ENCODE measurements at regions of chr2 and their contacts with region 1.

Region 1: DNA sequence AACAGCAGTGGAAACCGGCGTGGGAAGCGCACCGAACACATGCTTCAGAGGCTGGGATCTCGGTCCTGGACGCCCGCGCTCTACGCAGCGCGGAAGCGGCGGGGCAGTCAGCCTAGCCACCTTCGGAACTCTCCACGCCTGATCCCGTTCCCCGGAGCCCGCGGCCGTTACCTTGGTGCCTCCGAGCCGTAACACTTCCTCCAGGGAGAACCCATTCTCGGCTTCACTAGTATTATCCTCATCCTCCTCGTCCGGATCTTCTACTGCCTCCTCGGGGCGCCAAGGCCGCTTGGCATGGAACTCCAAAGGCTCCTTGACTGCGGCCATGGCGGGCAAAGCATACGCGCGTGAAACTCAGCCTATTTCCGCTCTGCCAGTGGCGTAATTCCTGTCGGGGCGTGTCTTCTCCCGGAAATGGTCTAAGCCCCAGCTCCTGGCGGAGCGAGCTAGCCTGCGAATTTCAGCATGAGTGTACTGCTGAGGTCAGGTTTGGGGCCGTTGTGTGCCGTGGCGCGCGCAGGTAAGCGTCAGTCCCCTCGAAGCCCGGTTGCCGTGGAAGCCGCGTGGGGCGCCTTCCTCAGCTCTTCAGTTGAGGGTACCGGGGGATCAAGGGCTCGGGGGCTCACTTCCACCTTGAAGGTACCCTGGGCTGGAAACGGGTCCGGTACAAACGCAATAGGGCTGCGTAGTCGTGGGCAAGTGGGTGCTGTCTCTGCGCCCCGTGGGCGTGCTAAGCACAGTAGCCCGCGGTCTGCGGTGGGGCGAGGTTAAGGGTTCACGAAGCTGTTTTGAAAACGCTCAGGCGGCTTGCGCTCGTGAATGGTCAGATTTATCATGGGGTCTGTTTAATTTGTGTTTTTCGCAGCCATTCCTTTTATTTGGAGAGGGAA is at the starts of genes CEBPZ and NDUFAF7:
- DNase-seq: peak; percentile 59
- ATAC-seq: peak; percentile 93
- H3K4me3 ChIP-seq: peak within 1 kb of the TSS; percentile 91
- H3K27ac ChIP-seq: peak within 1 kb of the TSS; percentile 87
- H3K4me1 ChIP-seq: no peaks in the 10 kb centered on the region
- H3K27me3 ChIP-seq: no peaks in the 10 kb centered on the region
- CTCF ChIP-seq: no peak
- EP300 ChIP-seq: no peak
- POLR2A ChIP-seq: peak; percentile 94
- RAD21 ChIP-seq: no peak
- polyA plus RNA-seq, gene CEBPZ: 38.2 to 69.6 TPM
- polyA plus RNA-seq, gene NDUFAF7: 18.3 to 25.0 TPM

Region 2: GRCh38 chr2:36993841-36994620 is 237.5 kb before region 1 on chr2:
- CTCF ChIA-PET with region 1: no interaction called
- POLR2A ChIA-PET with region 1: no interaction called
- RAD21 ChIA-PET with region 1: no interaction called
- SMC1A ChIA-PET with region 1: no interaction called
- in situ Hi-C with region 1: no loop called
- intact Hi-C with region 1: no loop called
- DNase-seq: no peak
- ATAC-seq: no peak
- H3K4me3 ChIP-seq: no peak overlapping the region
- H3K27ac ChIP-seq: no peak overlapping the region
- H3K4me1 ChIP-seq: no peaks in the 10 kb centered on the region
- H3K27me3 ChIP-seq: no peaks in the 10 kb centered on the region
- CTCF ChIP-seq: no peak
- EP300 ChIP-seq: no peak
- POLR2A ChIP-seq: no peak
- RAD21 ChIP-seq: no peak

Region 3: DNA sequence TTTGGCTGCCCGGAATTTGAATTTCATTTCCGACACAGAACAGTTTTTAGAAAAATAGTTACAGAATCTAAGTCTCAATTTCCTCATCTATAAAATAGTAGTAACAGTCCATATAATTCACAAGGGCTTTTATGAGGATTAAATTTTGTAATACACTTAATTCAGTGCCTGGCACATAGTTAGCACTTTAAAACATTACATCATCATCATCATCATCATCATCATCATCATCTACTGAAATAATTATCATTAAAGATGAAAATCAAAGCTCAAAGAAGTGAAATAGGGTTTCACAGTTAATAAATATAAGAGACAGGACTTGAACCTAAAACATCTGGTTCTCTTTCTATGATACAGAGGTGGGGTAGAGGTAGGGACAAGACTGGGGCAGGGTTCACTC is 160.6 kb before region 1 on chr2:
- CTCF ChIA-PET with region 1: no interaction called
- POLR2A ChIA-PET with region 1: no interaction called
- RAD21 ChIA-PET with region 1: no interaction called
- SMC1A ChIA-PET with region 1: no interaction called
- in situ Hi-C with region 1: no loop called
- intact Hi-C with region 1: no loop called
- DNase-seq: no peak
- ATAC-seq: no peak
- H3K4me3 ChIP-seq: no peak overlapping the region
- H3K27ac ChIP-seq: no peak overlapping the region
- H3K4me1 ChIP-seq: no peaks in the 10 kb centered on the region
- H3K27me3 ChIP-seq: no peaks in the 10 kb centered on the region
- CTCF ChIP-seq: no peak
- EP300 ChIP-seq: no peak
- POLR2A ChIP-seq: no peak
- RAD21 ChIP-seq: no peak

Region 4: GRCh38 chr2:37156857-37157714 is 74.4 kb before region 1 on chr2 and contains the start of gene EIF2AK2:
- CTCF ChIA-PET with region 1: interaction called, 3 read pairs
- POLR2A ChIA-PET with region 1: interaction called, 4 read pairs
- RAD21 ChIA-PET with region 1: interaction called, 5 read pairs
- SMC1A ChIA-PET with region 1: no interaction called
- in situ Hi-C with region 1: no loop called
- intact Hi-C with region 1: loop called (anchors 5 kb)
- DNase-seq: no peak
- ATAC-seq: peak; percentile 92
- H3K4me3 ChIP-seq: peak within 1 kb of the TSS; percentile 92
- H3K27ac ChIP-seq: peak within 1 kb of the TSS; percentile 95
- H3K4me1 ChIP-seq: peaks cover 12% of the 10 kb centered on the region
- H3K27me3 ChIP-seq: no peaks in the 10 kb centered on the region
- CTCF ChIP-seq: no peak
- EP300 ChIP-seq: no peak
- POLR2A ChIP-seq: peak; percentile 87
- RAD21 ChIP-seq: no peak
- polyA plus RNA-seq, gene EIF2AK2: 16.2 to 34.6 TPM

Region 5: DNA sequence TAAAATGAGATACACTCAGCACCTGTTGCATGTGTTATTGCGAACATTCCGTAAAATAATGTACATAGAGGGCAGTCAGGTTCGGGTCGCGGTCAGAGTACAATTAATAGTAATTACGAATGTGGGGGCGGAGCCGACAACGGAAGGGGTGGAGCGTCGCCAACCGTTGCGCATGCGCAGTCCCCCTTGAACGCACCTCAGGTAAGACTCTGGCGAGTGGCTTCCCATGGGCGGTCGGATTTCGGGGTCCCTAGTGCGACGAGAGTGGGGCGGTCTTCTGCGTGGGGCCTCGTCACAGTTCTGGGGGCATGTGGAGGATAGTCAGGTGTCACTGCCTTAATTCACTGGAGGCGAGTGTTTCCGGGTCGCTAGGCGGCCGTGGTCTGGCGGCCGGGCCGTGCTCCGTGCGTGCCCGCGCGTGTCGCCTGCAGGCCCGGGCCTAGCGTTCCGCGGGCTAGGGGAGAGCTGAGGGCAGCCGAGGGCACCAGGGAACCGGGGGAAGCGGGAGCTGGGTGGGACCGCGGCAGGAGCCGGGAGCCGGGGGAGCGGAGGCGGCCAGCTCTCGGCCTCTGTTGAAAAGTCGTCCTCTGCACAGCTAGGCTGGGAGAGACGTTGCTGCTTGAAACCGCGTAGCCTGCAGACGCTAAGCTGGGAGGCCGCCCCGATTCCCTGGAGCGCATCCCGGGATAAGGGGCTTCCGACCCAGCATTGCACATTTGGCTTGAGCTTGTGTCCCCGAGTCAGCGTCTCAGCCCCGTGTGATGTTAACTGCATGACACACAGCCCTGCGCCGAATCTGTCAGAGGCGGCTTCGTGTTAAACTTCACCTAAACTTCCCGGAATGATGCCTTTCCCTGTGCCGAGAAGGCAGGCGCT is 34.9 kb before region 1 on chr2 and contains the start of gene CEBPZOS:
- CTCF ChIA-PET with region 1: interaction called, 5 read pairs
- POLR2A ChIA-PET with region 1: interaction called, 11 read pairs
- RAD21 ChIA-PET with region 1: interaction called, 4 read pairs
- SMC1A ChIA-PET with region 1: interaction called, 6 read pairs
- in situ Hi-C with region 1: no loop called
- intact Hi-C with region 1: no loop called
- DNase-seq: peak; percentile 71
- ATAC-seq: peak; percentile 85
- H3K4me3 ChIP-seq: peak within 1 kb of the TSS; percentile 77
- H3K27ac ChIP-seq: peak within 1 kb of the TSS; percentile 78
- H3K4me1 ChIP-seq: peaks cover 5% of the 10 kb centered on the region; the same call in 1 of the 2 replicates
- H3K27me3 ChIP-seq: no peaks in the 10 kb centered on the region
- CTCF ChIP-seq: no peak
- EP300 ChIP-seq: no peak
- POLR2A ChIP-seq: peak; percentile 86
- RAD21 ChIP-seq: no peak
- polyA plus RNA-seq, gene CEBPZOS: 22.9 to 50.8 TPM

Region 6: GRCh38 chr2:37274359-37274965 is 43.0 kb after region 1 on chr2:
- CTCF ChIA-PET with region 1: no interaction called
- POLR2A ChIA-PET with region 1: no interaction called
- RAD21 ChIA-PET with region 1: no interaction called
- SMC1A ChIA-PET with region 1: no interaction called
- in situ Hi-C with region 1: no loop called
- intact Hi-C with region 1: no loop called
- DNase-seq: no peak
- ATAC-seq: no peak
- H3K4me3 ChIP-seq: no peak overlapping the region
- H3K27ac ChIP-seq: no peak overlapping the region
- H3K4me1 ChIP-seq: no peaks in the 10 kb centered on the region
- H3K27me3 ChIP-seq: no peaks in the 10 kb centered on the region
- CTCF ChIP-seq: no peak
- EP300 ChIP-seq: no peak
- POLR2A ChIP-seq: no peak
- RAD21 ChIP-seq: no peak

Region 7: GRCh38 chr2:37523814-37524362 is 292.4 kb after region 1 on chr2:
- CTCF ChIA-PET with region 1: no interaction called
- POLR2A ChIA-PET with region 1: no interaction called
- RAD21 ChIA-PET with region 1: no interaction called
- SMC1A ChIA-PET with region 1: no interaction called
- in situ Hi-C with region 1: no loop called
- intact Hi-C with region 1: no loop called
- DNase-seq: no peak
- ATAC-seq: no peak
- H3K4me3 ChIP-seq: no peak overlapping the region
- H3K27ac ChIP-seq: no peak overlapping the region
- H3K4me1 ChIP-seq: no peaks in the 10 kb centered on the region
- H3K27me3 ChIP-seq: no peaks in the 10 kb centered on the region
- CTCF ChIP-seq: no peak
- EP300 ChIP-seq: no peak
- POLR2A ChIP-seq: no peak
- RAD21 ChIP-seq: no peak

Measured in GM12878 (cell line).